ENCODE measurements at regions of chr2 and their contacts with region 1.

Region 1: GRCh38 chr2:2707206-2707991 is 376.3 kb upstream of the MYT1L start:
- DNase-seq: no peak
- ATAC-seq: no peak
- H3K4me3 ChIP-seq: no peak overlapping the region
- H3K4me3 Mint-ChIP-seq: no peak overlapping the region
- H3K27ac ChIP-seq: no peak overlapping the region
- H3K27ac Mint-ChIP-seq: no peak overlapping the region
- H3K4me1 ChIP-seq: peaks cover 7% of the 10 kb centered on the region
- H3K4me1 Mint-ChIP-seq: peaks cover 11% of the 10 kb centered on the region
- H3K27me3 ChIP-seq: no peaks in the 10 kb centered on the region
- H3K27me3 Mint-ChIP-seq: no peaks in the 10 kb centered on the region
- CTCF ChIP-seq: no peak

Region 2: GRCh38 chr2:2127467-2127866 is 579.9 kb before region 1 on chr2:
- CTCF ChIA-PET with region 1: no interaction called
- POLR2A ChIA-PET with region 1: no interaction called
- intact Hi-C with region 1: loop called in 1 of 2 experiments (anchors 10 kb)
- DNase-seq: no peak
- ATAC-seq: no peak
- H3K4me3 ChIP-seq: no peak overlapping the region
- H3K4me3 Mint-ChIP-seq: no peak overlapping the region
- H3K27ac ChIP-seq: no peak overlapping the region
- H3K27ac Mint-ChIP-seq: no peak overlapping the region
- H3K4me1 ChIP-seq: no peaks in the 10 kb centered on the region
- H3K4me1 Mint-ChIP-seq: no peaks in the 10 kb centered on the region
- H3K27me3 ChIP-seq: no peaks in the 10 kb centered on the region
- H3K27me3 Mint-ChIP-seq: peaks cover 4% of the 10 kb centered on the region
- CTCF ChIP-seq: no peak

Region 3: GRCh38 chr2:2610751-2611150 is 96.6 kb before region 1 on chr2:
- CTCF ChIA-PET with region 1: no interaction called
- POLR2A ChIA-PET with region 1: no interaction called
- intact Hi-C with region 1: no loop called
- DNase-seq: no peak
- ATAC-seq: no peak
- H3K4me3 ChIP-seq: no peak overlapping the region
- H3K4me3 Mint-ChIP-seq: no peak overlapping the region
- H3K27ac ChIP-seq: no peak overlapping the region
- H3K27ac Mint-ChIP-seq: no peak overlapping the region
- H3K4me1 ChIP-seq: peaks cover 7% of the 10 kb centered on the region
- H3K4me1 Mint-ChIP-seq: peaks cover 8% of the 10 kb centered on the region
- H3K27me3 ChIP-seq: no peaks in the 10 kb centered on the region
- H3K27me3 Mint-ChIP-seq: peaks cover 2% of the 10 kb centered on the region
- CTCF ChIP-seq: no peak

Region 4: DNA sequence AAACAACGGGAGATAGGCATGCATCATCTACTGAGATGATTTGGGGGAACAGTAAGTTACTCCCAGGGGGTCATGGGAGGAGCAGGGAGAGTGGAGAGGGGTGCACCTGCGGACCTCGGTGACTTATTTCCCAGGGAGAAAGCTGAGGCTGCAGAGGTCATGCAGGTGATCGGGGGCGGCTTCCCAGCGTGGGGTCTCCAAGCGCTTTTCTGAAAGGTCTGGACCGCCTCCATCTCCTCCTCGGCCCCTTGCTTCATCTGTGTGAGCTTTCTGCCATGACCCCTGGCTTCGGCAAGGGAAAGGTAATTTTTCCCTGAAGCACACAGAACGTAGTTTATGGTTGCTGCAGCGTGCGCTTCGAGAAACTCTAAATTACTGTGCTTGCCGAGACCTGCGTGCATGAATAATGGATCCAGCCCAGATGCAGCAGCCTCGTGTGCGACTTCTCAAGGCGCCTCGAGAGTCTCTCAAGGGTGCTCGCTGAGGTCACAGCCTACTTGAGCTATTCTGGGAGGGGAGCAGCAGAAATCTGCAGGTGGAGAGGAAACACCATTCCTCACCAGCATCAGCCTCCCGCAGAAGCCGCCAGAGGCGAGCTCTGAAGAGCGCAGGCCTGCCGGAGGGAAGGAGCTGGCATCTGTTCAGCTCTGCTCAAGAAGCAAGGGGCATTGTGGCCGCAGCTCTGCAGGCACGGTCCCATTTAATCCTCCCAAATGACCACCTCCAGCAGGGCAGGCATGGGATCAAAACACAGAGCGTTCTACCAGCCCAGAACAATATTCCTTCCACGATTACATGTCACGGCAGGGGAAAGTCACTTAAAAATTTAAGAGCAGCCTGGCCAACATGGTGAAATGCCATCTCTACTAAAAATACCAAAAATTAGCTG is 67.9 kb before region 1 on chr2:
- CTCF ChIA-PET with region 1: no interaction called
- POLR2A ChIA-PET with region 1: no interaction called
- intact Hi-C with region 1: no loop called
- DNase-seq: peak in 1 of 9 experiments; percentile 17
- ATAC-seq: no peak
- H3K4me3 ChIP-seq: no peak overlapping the region
- H3K4me3 Mint-ChIP-seq: no peak overlapping the region
- H3K27ac ChIP-seq: no peak overlapping the region
- H3K27ac Mint-ChIP-seq: no peak overlapping the region
- H3K4me1 ChIP-seq: no peaks in the 10 kb centered on the region
- H3K4me1 Mint-ChIP-seq: peaks cover 10% of the 10 kb centered on the region
- H3K27me3 ChIP-seq: no peaks in the 10 kb centered on the region
- H3K27me3 Mint-ChIP-seq: peaks cover 6% of the 10 kb centered on the region
- CTCF ChIP-seq: no peak

Region 5: GRCh38 chr2:2933426-2933825 is 226.0 kb after region 1 on chr2:
- CTCF ChIA-PET with region 1: no interaction called
- POLR2A ChIA-PET with region 1: no interaction called
- intact Hi-C with region 1: loop called in 1 of 2 experiments (anchors 5 kb)
- DNase-seq: peak in 1 of 9 experiments; percentile 31
- ATAC-seq: no peak
- H3K4me3 ChIP-seq: no peak overlapping the region
- H3K4me3 Mint-ChIP-seq: no peak overlapping the region
- H3K27ac ChIP-seq: no peak overlapping the region
- H3K27ac Mint-ChIP-seq: no peak overlapping the region
- H3K4me1 ChIP-seq: no peaks in the 10 kb centered on the region
- H3K4me1 Mint-ChIP-seq: no peaks in the 10 kb centered on the region
- H3K27me3 ChIP-seq: no peaks in the 10 kb centered on the region
- H3K27me3 Mint-ChIP-seq: peaks cover 8% of the 10 kb centered on the region
- CTCF ChIP-seq: no peak

Measured in CD8-positive, alpha-beta T cell (primary cell).